Activated CD4-positive, alpha-beta memory T cell treated with anti-CD3 and anti-CD28 coated beads for 36 hours (primary cell): ENCODE measurements at regions of chr20 and their contacts with region 1.

Region 1: GRCh38 chr20:35490736-35491181 is 35.4 kb downstream of the CEP250 start:
- DNase-seq: peak; percentile 78
- H3K4me3 Mint-ChIP-seq: peak overlapping the region; percentile 99
- H3K27ac Mint-ChIP-seq: peak overlapping the region; percentile 99
- H3K4me1 Mint-ChIP-seq: peaks cover 39% of the 10 kb centered on the region
- H3K27me3 Mint-ChIP-seq: no peaks in the 10 kb centered on the region

Region 2: DNA sequence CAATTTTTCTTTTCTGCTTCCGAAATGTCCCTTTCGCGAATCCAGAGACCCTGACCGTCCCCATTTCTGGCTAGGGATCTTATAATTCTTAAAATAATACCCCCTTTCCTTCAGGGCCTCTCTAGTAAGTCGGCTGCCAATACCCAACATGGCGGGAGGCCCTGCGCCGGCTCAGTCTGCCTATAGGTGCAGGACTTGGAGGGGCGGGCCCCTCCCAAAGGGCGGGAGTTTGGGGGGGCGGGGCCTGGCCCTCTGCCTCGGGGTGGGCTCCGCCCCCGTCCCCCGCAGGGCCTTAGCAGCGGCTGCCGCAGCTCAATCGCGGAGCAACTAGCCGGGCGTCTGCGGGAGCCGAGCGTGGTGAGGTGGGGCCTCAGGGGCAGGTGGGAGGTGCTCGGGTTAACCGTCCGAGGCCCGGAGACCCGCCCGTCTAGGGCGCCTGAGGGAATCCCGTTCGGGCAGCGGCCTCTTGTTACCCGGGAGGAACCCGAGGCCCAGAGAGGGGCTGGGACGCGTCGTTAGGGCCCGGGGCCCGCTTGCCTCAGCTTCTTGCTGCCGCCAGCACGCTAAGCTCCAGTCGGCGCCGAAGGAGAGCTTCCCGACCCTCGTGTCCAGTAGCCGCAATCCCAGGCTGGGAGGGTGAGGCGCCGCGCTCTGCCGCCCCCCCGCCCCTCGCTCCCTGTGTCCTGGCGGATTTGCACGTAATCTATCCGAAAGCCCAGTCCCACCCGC is 35.7 kb before region 1 on chr20 and contains the start of gene CEP250:
- CTCF ChIA-PET with region 1: no interaction called
- POLR2A ChIA-PET with region 1: interaction called, 15 read pairs
- intact Hi-C with region 1: no loop called
- DNase-seq: peak; percentile 95
- H3K4me3 Mint-ChIP-seq: peak within 1 kb of the TSS; percentile 88
- H3K27ac Mint-ChIP-seq: peak within 1 kb of the TSS; percentile 97
- H3K4me1 Mint-ChIP-seq: peaks cover 28% of the 10 kb centered on the region
- H3K27me3 Mint-ChIP-seq: no peaks in the 10 kb centered on the region
- total RNA-seq, gene CEP250: 47.2 to 60.8 TPM

Region 3: DNA sequence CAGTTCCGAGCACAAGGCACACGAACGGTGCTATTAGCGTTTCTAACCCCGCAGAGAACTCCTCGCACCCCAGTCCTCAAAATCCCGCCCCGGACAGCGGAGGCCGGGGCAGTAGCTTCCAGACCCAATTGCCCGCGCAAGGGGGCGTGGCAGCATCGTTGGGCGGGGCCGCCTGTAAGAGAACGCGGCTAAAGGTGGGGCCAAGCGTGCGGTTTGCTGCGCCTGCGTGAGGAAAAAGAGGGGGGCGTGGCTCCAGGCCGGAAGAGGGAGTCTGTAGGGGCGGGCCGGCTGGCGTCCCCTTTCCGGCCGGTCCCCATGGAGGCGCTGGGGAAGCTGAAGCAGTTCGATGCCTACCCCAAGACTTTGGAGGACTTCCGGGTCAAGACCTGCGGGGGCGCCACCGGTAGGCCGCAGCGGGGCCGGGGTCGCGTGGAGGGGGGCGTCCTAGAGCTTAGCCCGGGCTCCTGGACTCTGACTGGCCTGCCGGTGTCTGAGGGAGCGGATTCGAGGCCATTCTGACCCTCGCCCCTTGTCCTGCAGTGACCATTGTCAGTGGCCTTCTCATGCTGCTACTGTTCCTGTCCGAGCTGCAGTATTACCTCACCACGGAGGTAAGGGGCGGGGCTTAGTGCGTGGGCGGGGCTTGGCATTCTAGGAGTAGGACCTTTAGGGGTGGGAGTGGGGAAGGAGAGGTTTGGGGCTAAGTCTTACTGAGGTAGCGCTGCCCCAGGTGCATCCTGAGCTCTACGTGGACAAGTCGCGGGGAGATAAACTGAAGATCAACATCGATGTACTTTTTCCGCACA is 51.2 kb after region 1 on chr20 and contains the start of gene ERGIC3:
- CTCF ChIA-PET with region 1: interaction called, 3 read pairs
- POLR2A ChIA-PET with region 1: interaction called, 7 read pairs
- intact Hi-C with region 1: loop called (anchors 2 kb)
- DNase-seq: peak; percentile 99
- H3K4me3 Mint-ChIP-seq: peak within 1 kb of the TSS; percentile 86
- H3K27ac Mint-ChIP-seq: peak within 1 kb of the TSS; percentile 79
- H3K4me1 Mint-ChIP-seq: peaks cover 20% of the 10 kb centered on the region
- H3K27me3 Mint-ChIP-seq: no peaks in the 10 kb centered on the region
- total RNA-seq, gene ERGIC3: 109 to 120 TPM